ENCODE measurements at regions of chr2 and their contacts with region 1.

Region 1: DNA sequence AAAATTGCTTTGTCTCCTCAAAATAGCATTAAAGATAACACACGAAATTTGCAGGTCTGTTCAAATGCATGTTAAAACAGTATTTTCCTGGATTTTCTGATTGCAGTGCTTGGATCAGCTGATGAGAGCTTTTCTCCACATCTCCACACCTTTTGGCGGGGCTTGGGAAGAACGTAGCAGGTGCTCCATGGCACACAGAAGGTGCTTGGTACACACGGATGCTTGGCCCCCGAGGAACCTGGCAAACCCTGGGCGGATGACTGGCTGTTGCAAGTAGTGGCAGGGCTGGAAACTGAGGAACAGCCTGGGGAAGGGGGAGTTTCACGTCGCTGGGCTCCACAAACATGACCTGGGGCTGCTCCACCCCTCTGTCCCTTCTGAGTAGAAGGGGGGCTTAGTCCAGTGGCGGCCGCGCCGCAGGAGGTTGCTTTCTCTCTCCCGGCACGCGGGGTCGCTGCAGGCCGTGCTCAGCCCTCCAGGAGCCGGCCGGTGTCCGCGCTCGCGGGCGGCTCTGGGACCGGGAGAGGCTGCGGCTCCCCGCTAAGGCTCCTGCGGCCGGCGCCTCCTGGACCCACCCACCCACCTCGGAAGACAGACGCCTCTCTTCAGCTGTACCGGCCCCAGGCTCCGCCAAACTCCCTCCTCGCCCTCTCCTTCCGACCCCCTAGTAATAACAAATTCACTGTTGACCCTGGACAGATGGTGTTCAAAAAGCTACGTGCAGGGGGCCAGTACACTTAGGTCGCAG is 69.3 kb downstream of the MARCO start:
- DNase-seq: peak in 2 of 3 donors; percentile 36 to 55
- H3K4me3 ChIP-seq: no peak overlapping the region
- H3K4me3 Mint-ChIP-seq: peak overlapping the region in 1 of 2 donors; percentile 75
- H3K27ac ChIP-seq: no peak overlapping the region
- H3K27ac Mint-ChIP-seq: peak overlapping the region in 1 of 7 donors; percentile 67
- H3K4me1 ChIP-seq: peaks cover 16 to 24% of the 10 kb centered on the region in 2 donors
- H3K4me1 Mint-ChIP-seq: peaks cover 34% of the 10 kb centered on the region
- H3K27me3 ChIP-seq: peaks cover 8 to 34% of the 10 kb centered on the region in 2 donors
- H3K27me3 Mint-ChIP-seq: peaks cover 28 to 47% (median 45%) of the 10 kb centered on the region in 3 donors
- CTCF ChIP-seq: peak; percentile 76

Region 2: GRCh38 chr2:118940486-118941205 is 70.7 kb before region 1 on chr2:
- intact Hi-C with region 1: no loop called
- DNase-seq: peak; percentile 77 to 93 (median 93)
- H3K4me3 ChIP-seq: peak overlapping the region in 2 of 3 experiments; percentile 12 to 60
- H3K4me3 Mint-ChIP-seq: peak overlapping the region; percentile 59 to 75
- H3K27ac ChIP-seq: peak overlapping the region; percentile 91 to 93
- H3K27ac Mint-ChIP-seq: peak overlapping the region; percentile 94 to 97 (median 95)
- H3K4me1 ChIP-seq: peaks cover 89 to 96% of the 10 kb centered on the region in 2 donors
- H3K4me1 Mint-ChIP-seq: peaks cover 54% of the 10 kb centered on the region
- H3K27me3 ChIP-seq: no peaks in the 10 kb centered on the region
- H3K27me3 Mint-ChIP-seq: peaks cover 0 to 2% (median 0%) of the 10 kb centered on the region in 3 donors
- CTCF ChIP-seq: peak; percentile 10

Region 3: DNA sequence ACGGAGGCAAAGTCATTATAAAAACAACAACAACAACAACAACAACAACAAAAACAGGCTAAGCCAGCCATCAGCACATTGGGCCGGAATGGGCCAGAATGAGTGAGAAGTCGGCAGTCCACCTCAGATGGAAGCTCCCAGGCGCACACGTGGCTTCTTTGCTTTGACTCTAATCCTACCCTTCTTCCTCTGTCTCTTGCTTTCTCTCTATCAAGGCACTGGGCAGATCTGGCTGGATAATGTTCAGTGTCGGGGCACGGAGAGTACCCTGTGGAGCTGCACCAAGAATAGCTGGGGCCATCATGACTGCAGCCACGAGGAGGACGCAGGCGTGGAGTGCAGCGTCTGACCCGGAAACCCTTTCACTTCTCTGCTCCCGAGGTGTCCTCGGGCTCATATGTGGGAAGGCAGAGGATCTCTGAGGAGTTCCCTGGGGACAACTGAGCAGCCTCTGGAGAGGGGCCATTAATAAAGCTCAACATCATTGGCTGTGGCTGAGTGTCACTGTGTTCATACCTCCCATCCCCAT is 17.1 kb before region 1 on chr2:
- intact Hi-C with region 1: no loop called
- DNase-seq: no peak
- H3K4me3 ChIP-seq: no peak overlapping the region
- H3K4me3 Mint-ChIP-seq: peak overlapping the region in 1 of 2 donors; percentile 36
- H3K27ac ChIP-seq: no peak overlapping the region
- H3K27ac Mint-ChIP-seq: peak overlapping the region in 1 of 7 donors; percentile 1
- H3K4me1 ChIP-seq: peaks cover 12% of the 10 kb centered on the region in 2 donors
- H3K4me1 Mint-ChIP-seq: peaks cover 22% of the 10 kb centered on the region
- H3K27me3 ChIP-seq: peaks cover 0 to 3% of the 10 kb centered on the region in 2 donors
- H3K27me3 Mint-ChIP-seq: peaks cover 9 to 18% (median 13%) of the 10 kb centered on the region in 3 donors
- CTCF ChIP-seq: no peak

Region 4: GRCh38 chr2:119126650-119127049 is 115.3 kb after region 1 on chr2:
- intact Hi-C with region 1: loop called in 1 of 2 experiments (anchors 5 kb)
- DNase-seq: peak; percentile 14 to 45 (median 32)
- H3K4me3 ChIP-seq: no peak overlapping the region
- H3K4me3 Mint-ChIP-seq: peak overlapping the region in 1 of 2 donors; percentile 67
- H3K27ac ChIP-seq: no peak overlapping the region
- H3K27ac Mint-ChIP-seq: no peak overlapping the region
- H3K4me1 ChIP-seq: no peaks in the 10 kb centered on the region
- H3K4me1 Mint-ChIP-seq: peaks cover 3% of the 10 kb centered on the region
- H3K27me3 ChIP-seq: peaks cover 0 to 6% of the 10 kb centered on the region in 2 donors
- H3K27me3 Mint-ChIP-seq: peaks cover 29 to 51% (median 31%) of the 10 kb centered on the region in 3 donors
- CTCF ChIP-seq: peak; percentile 83

Region 5: DNA sequence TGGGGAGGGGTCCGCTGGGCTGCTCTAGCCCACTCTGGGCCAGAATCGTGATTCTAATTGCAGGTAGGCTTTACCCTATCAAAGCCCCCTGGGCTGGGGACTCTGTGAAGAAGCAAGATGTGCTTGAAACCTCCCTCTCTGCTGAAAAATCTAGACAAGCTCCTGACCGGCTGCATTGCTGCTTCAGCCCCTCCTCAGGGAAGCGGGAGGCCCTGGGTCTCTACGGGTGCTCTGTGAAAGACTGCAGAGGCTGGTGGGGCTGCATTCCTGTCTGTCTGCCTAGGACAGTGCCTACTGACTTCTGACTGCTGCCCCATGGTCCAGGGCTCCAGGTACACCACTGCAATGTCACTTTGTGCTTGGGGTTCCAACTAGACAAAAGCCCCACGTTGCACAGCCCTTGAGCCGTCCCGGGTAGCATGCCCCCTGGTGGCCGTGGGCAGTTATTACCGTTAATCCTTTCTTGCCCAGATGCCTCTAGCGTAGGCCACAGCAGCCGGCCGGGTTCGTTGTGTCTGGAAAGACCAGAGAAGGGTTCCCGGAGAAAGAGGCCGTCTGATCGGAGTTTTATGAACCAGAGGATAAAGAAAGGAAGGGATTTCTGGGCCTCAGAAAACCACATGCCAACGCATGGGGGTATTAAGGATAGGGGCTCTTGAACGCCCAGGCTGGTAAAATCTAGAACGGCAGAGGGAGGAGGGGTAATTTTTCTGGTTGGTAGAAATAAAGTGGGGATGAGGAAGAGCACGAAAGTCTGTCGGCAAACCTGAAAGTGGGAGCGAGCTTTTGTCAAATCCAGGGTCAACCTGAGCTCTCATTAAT is 163.1 kb after region 1 on chr2:
- intact Hi-C with region 1: loop called (anchors 10 kb)
- DNase-seq: peak; percentile 27 to 54 (median 44)
- H3K4me3 ChIP-seq: no peak overlapping the region
- H3K4me3 Mint-ChIP-seq: no peak overlapping the region
- H3K27ac ChIP-seq: no peak overlapping the region
- H3K27ac Mint-ChIP-seq: no peak overlapping the region
- H3K4me1 ChIP-seq: no peaks in the 10 kb centered on the region
- H3K4me1 Mint-ChIP-seq: no peaks in the 10 kb centered on the region
- H3K27me3 ChIP-seq: no peaks in the 10 kb centered on the region
- H3K27me3 Mint-ChIP-seq: peaks cover 1 to 8% (median 6%) of the 10 kb centered on the region in 3 donors
- CTCF ChIP-seq: peak; percentile 93

Region 6: DNA sequence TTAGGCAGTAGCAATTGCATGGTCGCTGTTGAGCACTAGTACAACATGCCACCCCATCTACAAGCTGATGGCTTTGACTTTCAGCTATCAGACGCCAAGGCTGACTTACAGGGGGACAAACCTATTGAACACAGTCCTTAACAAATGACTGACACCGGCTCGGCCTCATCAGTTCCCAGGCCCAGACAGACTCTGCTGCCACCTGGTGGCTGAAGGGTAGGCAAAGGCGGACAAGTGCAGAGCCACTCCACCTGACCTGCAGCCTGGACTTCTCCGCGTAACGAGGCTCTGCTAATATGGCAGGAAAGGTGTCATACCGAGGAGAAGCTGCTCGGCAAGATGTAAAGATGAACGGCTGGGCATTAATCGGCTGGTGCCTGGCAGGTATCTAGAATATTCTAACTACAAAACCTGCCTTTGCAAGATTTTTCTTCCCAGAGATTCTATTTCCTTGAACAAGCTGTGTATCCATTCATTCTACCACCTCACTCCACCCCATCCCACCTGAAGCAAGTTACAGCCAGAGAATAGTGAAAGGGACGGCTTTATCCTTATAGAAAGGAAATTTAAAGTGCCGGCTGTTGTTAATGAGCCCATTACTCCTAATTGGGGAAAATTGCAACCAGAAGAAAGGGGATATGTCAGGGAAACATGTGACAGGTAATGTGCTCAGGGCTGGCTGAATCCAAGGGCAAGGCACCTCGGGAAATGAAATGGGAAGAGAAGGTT is 279.7 kb after region 1 on chr2:
- intact Hi-C with region 1: loop called (anchors 10 kb)
- DNase-seq: peak in 2 of 3 donors; percentile 56 to 68
- H3K4me3 ChIP-seq: no peak overlapping the region
- H3K4me3 Mint-ChIP-seq: no peak overlapping the region
- H3K27ac ChIP-seq: no peak overlapping the region
- H3K27ac Mint-ChIP-seq: no peak overlapping the region
- H3K4me1 ChIP-seq: no peaks in the 10 kb centered on the region
- H3K4me1 Mint-ChIP-seq: peaks cover 3% of the 10 kb centered on the region
- H3K27me3 ChIP-seq: no peaks in the 10 kb centered on the region
- H3K27me3 Mint-ChIP-seq: peaks cover 0 to 4% (median 1%) of the 10 kb centered on the region in 3 donors
- CTCF ChIP-seq: peak; percentile 77